Activated B cell treated with CpG ODN at 0.5 μM for 24 hours (primary cell): ENCODE measurements at regions of chr1 and their contacts with region 1.

Region 1: DNA sequence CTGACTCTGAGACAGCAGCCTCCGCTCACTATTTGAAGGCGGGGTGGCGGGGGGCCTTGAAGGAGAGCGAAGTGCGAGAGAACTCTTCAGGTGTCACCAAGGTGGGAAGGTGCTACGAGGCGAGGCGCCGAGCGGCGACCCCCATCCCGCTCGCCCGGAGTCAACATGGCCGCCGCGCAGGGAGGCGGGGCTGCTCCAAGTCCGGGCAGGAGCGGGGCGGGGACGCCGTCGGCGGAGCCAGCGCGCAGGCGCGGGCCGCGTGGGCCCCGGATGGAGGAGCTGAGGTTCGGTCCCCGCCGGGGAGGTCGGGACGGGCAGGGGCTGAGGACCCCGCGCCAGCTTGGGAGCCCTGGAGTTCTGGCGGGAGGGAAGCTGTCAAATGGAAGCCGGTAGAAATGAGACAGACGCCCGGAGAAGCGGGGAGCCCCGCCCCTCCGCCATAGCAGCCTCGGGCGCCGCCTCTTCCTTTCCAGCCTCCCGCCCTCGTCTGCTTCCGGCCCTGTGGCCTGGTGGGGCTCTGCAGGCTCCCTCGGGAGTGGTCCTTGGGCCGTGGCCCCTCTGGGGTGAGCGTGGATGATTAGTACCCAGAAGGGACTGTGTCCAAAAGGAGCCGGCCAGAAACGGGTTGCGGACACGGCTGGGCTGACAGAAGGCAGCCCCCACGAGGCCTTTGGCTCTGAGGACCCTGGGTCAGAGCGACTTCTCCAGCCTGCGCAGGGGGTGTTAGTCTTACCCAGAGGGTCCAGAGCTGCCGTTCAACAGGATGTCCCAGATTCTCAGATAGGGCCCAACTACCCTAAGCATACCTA is at the start of gene PIGV:
- DNase-seq: peak; percentile 94
- ATAC-seq: peak; percentile 70
- H3K4me3 Mint-ChIP-seq: peak within 1 kb of the TSS; percentile 98
- H3K27ac Mint-ChIP-seq: peak within 1 kb of the TSS; percentile 100
- H3K4me1 Mint-ChIP-seq: peaks cover 51% of the 10 kb centered on the region
- H3K27me3 Mint-ChIP-seq: no peaks in the 10 kb centered on the region
- CTCF ChIP-seq: no peak
- total RNA-seq, gene PIGV: 29.6 and 35.4 TPM in 2 replicates

Region 2: DNA sequence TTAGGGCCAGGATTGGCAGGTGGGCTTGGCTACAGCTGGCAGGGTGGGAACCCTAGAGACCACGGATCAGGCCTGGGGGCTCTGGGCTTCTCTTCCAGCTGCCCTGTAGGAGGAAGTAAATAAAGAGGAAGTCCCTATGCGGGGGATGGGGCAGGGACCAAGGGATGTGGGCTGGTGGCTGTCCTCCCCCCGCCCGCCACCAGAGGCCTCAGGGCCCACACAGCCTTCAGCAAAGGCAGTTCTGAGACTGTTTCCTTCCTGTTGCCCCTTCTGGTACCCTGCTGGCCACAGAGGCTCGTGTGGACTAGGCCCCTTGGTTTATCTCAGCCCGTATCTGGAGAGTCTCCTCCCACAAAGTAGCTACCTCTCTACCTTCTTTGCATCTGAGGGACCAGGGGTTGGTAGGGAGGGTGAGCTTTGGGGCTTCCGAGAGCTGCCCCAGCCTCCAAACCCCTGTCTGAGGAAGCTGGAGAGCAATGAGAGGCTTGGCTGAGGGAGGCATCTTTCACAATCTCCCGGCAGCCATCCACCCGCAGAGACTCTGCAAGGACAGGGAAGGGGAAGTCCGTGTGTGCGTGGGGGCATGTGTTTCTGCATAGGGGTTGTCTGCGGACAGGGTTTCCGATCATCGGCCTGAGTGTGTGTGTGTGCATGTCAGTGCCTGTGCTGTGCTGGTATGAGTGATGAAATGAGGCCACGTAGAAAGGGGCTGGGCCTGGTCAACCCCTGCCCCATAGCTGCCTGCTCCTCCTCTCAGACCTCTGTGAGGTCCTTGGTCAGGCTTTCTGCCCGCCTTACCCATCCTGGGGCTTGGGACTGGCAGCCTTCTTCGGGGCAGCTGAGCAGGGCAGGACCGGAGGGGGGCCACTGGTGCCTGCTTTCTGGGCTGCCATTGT is 245.8 kb before region 1 on chr1:
- CTCF ChIA-PET with region 1: interaction called, 7 read pairs
- POLR2A ChIA-PET with region 1: interaction called, 15 read pairs
- intact Hi-C with region 1: loop called (anchors 1 kb)
- DNase-seq: peak; percentile 72
- ATAC-seq: peak; percentile 62
- H3K4me3 Mint-ChIP-seq: peak overlapping the region; percentile 82
- H3K27ac Mint-ChIP-seq: peak overlapping the region; percentile 99
- H3K4me1 Mint-ChIP-seq: peaks cover 93% of the 10 kb centered on the region
- H3K27me3 Mint-ChIP-seq: no peaks in the 10 kb centered on the region
- CTCF ChIP-seq: no peak

Region 3: DNA sequence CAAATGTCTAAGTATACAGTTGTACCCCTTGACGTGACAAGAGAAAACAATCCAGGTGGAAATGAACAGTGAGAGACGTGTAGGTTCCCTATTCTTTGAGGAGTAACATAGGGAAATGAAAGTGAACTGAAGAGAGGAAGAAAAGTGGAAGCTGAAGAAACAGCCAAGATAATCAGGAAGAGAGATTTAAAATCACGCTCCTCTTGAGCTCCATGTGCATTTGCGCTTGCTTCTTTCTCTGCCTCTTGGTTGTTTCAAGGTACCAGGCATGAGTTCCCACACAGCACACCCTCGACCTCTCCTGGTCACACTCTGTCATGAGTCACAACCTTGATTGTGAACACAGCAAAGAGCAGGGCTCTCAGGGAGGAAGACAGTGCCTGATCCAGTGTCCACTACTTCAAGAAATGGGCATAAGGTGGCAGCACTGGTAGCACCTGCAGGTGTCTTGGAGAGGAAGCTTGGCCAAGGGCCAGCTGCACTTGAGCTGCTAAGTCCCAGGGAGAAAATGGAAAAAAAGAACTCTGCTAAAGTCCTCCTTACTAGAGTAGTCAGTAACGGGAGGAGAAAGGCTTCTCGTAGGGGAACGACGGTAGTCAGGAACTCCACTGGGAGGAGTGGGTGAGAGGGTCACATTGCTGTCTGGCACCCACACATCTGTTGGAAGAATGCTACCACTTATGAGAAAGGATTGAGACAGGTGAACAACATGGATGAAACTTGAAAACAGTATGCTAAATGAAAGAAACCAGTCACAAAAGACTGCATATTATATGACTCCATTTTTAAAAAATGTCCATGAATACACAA is 110.4 kb before region 1 on chr1:
- CTCF ChIA-PET with region 1: interaction called, 81 read pairs
- POLR2A ChIA-PET with region 1: interaction called, 25 read pairs
- intact Hi-C with region 1: loop called (anchors 1 kb)
- DNase-seq: peak; percentile 32
- ATAC-seq: peak; percentile 99
- H3K4me3 Mint-ChIP-seq: peak overlapping the region; percentile 59
- H3K27ac Mint-ChIP-seq: peak overlapping the region; percentile 83
- H3K4me1 Mint-ChIP-seq: peaks cover 14% of the 10 kb centered on the region
- H3K27me3 Mint-ChIP-seq: no peaks in the 10 kb centered on the region
- CTCF ChIP-seq: no peak

Region 4: DNA sequence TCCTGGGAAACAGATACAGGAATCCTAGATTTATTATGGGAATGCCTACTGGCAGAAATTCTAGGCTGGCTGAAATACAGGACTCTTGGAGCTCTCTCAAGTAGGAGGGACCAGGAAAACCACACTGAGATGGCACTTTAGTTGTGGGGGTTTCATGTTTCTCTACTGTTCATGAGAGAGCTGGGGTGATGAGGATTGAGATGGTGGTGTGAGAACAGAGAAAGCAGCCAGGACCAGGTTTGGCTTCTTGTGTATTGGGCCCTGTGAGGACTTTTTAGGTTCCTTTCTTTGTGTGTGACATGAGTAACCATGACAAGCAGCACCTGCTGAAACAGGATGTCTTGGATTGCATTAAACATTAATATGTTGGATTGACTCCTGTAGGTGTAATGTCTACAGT is 87.2 kb before region 1 on chr1:
- CTCF ChIA-PET with region 1: interaction called, 41 read pairs
- POLR2A ChIA-PET with region 1: interaction called, 308 read pairs
- intact Hi-C with region 1: loop called (anchors 1 kb)
- DNase-seq: no peak
- ATAC-seq: no peak
- H3K4me3 Mint-ChIP-seq: no peak overlapping the region
- H3K27ac Mint-ChIP-seq: no peak overlapping the region
- H3K4me1 Mint-ChIP-seq: peaks cover 8% of the 10 kb centered on the region
- H3K27me3 Mint-ChIP-seq: no peaks in the 10 kb centered on the region
- CTCF ChIP-seq: no peak

Region 5: GRCh38 chr1:26771643-26772321 is 16.1 kb before region 1 on chr1:
- CTCF ChIA-PET with region 1: interaction called, 10 read pairs
- POLR2A ChIA-PET with region 1: interaction called, 9 read pairs
- intact Hi-C with region 1: no loop called
- DNase-seq: no peak
- ATAC-seq: peak; percentile 68
- H3K4me3 Mint-ChIP-seq: no peak overlapping the region
- H3K27ac Mint-ChIP-seq: peak overlapping the region; percentile 65
- H3K4me1 Mint-ChIP-seq: peaks cover 5% of the 10 kb centered on the region
- H3K27me3 Mint-ChIP-seq: no peaks in the 10 kb centered on the region
- CTCF ChIP-seq: no peak

Region 6: GRCh38 chr1:26833432-26834405 is 45.8 kb after region 1 on chr1:
- CTCF ChIA-PET with region 1: interaction called, 11 read pairs
- POLR2A ChIA-PET with region 1: interaction called, 7 read pairs
- intact Hi-C with region 1: no loop called
- DNase-seq: peak; percentile 61
- ATAC-seq: peak; percentile 96
- H3K4me3 Mint-ChIP-seq: peak overlapping the region; percentile 53
- H3K27ac Mint-ChIP-seq: peak overlapping the region; percentile 93
- H3K4me1 Mint-ChIP-seq: peaks cover 59% of the 10 kb centered on the region
- H3K27me3 Mint-ChIP-seq: no peaks in the 10 kb centered on the region
- CTCF ChIP-seq: no peak